Right ventricle myocardium inferior (tissue), 1 donor: ENCODE measurements at regions of chr11 and their contacts with region 1.

Region 1: GRCh38 chr11:355581-356458 is 13.5 kb upstream of the B4GALNT4 start:
- DNase-seq: peak; percentile 97
- ATAC-seq: peak; percentile 88

Region 2: DNA sequence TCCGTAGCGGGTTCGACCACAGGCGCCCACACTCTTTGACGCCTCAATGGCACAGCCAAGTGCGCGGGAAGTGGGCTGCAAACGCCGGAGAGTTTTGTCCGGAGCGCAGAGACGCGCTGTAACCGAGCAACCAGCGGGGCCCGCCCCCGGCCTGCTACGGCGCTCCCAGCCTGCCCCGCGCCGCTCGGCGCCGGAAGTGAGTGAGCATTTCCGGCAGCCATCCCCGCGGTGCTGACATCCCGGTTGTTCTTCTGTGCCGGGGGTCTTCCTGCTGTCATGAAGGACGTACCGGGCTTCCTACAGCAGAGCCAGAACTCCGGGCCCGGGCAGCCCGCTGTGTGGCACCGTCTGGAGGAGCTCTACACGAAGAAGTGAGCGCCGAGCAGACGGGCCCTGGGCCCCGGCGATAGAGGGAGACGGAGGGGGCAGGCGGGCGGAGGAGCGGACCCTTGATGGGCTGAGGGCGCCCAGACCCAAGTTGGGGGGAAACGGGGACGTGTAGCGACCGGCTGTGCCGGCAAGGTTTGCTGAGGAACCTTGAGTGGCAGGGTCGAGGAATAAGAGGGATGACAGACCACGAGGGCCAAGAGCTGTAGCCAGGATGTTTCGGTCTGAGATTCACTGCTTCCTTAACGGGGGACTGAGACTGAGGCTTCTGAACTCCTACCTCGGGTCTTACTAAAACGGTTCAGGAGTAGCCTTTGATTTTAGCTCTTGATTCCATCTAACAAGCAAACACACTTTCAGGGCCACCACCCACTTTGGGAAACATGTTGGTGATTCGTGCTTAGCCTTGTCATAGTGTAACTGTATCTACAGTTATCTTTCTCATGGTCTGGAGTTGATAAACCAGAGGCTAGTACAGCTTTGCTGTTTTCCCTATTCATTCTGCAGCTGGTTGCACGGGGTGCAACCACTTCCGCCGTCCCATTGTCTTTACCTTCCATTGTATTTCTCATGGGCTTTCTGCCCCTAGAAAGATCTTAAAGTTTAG is 118.7 kb before region 1 on chr11 and contains the start of gene PSMD13:
- intact Hi-C with region 1: loop called (anchors 5 kb)
- DNase-seq: peak; percentile 94
- ATAC-seq: peak; percentile 91
- total RNA-seq, gene PSMD13: 91.7 TPM

Region 3: GRCh38 chr11:313787-314547 is 41.9 kb before region 1 on chr11 and contains the start of gene IFITM1:
- intact Hi-C with region 1: loop called (anchors 2 kb)
- DNase-seq: peak; percentile 68
- ATAC-seq: peak; percentile 18
- total RNA-seq, gene IFITM1: 125 TPM

Region 4: GRCh38 chr11:326842-327580 is 28.8 kb before region 1 on chr11:
- intact Hi-C with region 1: loop called (anchors 1 kb)
- DNase-seq: peak; percentile 93
- ATAC-seq: peak; percentile 89

Region 5: DNA sequence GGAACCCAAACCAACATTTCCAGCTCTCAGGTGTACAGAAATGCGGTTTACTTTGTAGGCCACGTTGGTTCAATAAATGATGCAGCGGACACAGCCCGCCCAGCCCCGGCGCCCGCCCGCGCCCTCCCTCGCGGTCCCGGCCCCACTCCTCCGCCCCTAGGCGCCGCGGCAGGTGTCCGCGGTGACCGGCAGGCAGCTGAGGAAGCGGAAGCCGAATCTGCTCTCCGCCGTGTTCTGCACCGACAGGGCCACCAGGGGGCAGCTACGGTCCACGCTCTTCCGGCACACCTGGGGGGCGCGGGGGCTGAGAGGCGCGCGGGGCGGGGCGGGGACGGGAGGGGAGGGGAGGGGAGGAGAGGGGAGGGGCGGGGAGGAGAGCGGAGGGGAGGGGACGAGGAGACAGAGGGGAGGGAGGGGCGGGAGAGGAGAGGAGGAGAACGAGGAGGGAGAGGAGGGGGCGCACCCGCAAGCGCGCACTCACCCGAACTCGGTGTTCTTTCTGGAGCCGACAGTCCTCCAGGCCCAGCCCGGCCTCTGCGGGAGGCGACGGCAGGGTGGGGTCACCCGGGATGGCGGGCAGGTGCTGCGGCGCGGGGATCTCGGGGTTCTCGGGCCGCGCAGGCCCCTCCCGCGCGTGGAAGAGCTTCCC is 199.1 kb after region 1 on chr11:
- intact Hi-C with region 1: no loop called
- DNase-seq: no peak
- ATAC-seq: peak; percentile 64

Region 6: GRCh38 chr11:623999-624704 is 268.3 kb after region 1 on chr11:
- intact Hi-C with region 1: no loop called
- DNase-seq: no peak
- ATAC-seq: no peak